ENCODE measurements at regions of chr17 and their contacts with region 1.

Region 1: DNA sequence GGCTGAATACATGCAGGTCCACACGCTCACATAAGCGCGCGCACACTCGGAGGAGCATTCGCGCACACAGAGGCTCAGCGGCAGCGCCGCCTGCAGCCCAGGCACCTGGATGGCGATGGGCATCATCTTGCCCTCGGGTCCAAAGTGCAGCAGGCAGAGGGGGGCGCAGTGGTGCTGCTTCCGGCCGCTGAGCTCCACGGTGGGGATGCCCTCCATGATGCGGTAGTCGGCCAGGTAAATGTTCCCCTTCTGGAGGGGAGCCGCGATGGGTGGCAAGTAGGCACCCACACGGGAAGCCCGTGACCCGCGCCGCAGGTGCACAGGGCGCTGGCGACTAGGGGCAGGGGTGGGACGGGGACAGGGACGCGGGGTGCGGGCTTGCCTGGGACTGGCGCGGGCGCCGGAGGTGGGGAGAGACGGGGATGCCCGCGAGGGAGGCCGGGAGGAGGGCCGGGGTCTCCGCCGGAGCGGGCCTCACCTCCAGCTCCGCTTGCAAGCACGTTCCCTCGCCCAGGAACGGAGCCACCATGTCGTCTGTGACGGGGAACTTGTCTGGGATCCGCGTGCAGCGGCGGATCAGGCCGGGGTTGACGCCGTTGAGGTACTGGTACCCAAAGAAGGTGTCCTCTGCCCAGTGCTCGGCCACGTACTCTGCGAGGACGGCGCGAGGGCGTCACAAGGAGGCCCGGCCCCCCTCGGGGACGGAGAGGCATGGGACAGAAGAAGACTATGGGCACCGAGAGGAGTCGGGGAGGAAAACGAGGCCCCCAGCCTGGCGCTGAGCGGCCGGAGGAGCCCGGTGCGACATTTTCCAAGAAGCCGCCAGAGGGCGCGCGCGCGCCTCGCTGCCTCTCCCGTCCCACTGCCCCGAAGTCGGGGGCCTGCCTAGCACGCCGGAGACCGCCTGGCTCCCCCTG is 8.0 kb downstream of the ALOX12B start:
- DNase-seq: peak; percentile 78 to 90 (median 88)
- H3K4me3 ChIP-seq: peak overlapping the region; percentile 31 to 84 (median 55)
- H3K27ac ChIP-seq: no peak overlapping the region
- H3K4me1 ChIP-seq: peaks cover 0 to 14% (median 12%) of the 10 kb centered on the region in 4 experiments
- H3K27me3 ChIP-seq: peaks cover 0 to 12% (median 8%) of the 10 kb centered on the region in 5 experiments

Region 2: DNA sequence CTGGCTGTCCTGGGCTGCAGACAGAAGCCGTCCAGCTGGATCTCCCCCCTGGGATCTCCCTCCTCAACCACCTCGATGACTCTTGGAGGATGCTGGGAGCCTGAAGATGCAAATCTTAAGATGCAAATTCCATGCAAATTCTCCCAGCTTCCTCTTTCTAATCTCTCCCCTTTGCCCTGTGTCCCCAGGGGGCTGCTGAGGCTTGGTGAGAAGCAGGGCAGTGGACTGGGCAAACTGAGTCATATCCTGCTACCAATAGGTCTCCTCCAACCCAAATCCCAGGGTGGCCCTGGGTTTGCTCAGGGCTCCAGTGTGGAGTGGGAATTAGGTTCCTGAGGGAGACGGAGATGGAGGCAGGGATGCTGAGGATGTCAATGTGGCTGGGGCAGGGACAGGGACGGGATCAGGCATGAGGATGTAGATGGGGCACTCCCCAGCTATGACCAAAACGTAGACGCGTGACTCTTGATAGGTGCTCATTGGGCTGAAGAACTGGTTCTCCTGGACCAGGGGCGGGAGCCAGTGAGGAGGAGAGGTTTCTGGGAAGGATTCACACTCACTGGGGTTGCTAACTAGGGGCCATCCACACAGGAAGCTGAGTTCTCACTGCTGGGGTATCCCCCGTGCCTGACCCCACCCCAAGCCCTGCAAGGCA is 11.6 kb after region 1 on chr17:
- CTCF ChIA-PET with region 1: interaction called, 145 read pairs
- POLR2A ChIA-PET with region 1: no interaction called
- DNase-seq: peak in 2 of 3 donors; percentile 41 to 46
- H3K4me3 ChIP-seq: no peak overlapping the region
- H3K27ac ChIP-seq: no peak overlapping the region
- H3K4me1 ChIP-seq: peaks cover 0 to 8% (median 5%) of the 10 kb centered on the region in 4 experiments
- H3K27me3 ChIP-seq: peaks cover 0 to 18% (median 10%) of the 10 kb centered on the region in 5 experiments